ENCODE measurements at regions of chr20 and their contacts with region 1.

Region 1: DNA sequence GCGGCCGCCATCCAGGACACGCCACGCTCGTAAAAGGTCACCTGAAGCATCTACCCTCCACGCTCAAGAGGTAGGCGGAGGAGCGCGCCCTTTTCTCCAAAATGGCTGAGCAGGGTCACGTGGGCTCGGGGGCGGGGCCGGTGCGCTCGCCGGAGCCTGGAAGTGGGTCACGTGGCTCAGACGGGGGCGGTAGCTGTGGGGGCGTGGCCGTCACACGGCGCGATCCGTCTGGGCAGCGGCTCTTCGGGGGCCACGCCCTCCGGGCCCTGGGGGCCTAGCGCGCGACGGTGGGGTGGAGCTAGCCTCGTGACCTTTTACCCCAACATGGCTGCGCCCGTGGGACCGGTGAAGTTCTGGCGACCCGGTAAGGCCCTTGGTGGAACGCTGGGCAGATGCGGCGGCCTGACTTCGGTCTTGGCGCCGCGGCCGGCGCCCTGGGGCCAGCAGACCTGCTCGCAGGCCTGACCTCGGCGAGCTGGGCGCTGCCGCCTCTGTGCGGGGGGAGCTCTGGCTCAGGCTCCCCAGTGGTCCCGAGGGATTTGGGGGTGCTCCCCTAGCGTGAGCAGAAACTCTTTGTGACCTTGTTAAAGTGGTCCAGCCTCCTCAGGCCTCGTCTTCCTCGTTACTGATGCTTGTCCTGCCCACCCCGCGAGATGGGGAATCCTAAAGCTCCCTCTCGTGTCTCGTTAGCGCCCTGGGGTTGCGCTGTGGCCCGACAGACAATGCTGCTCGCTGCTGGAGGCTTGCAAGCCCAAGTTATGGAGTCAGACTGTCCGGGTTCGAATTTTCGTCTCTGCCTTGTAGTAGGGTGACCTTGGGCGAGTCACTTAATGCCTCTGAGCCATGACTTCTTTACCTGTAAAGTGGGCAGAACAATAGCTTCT is at the start of gene DHX35:
- DNase-seq: peak; percentile 98 to 99
- ATAC-seq: peak; percentile 100
- H3K4me3 ChIP-seq: peak within 1 kb of the TSS; percentile 82 to 99 (median 96)
- H3K27ac ChIP-seq: peak within 1 kb of the TSS; percentile 89 to 96 (median 94)
- H3K4me1 ChIP-seq: peaks cover 0 to 22% (median 15%) of the 10 kb centered on the region in 9 donors
- H3K27me3 ChIP-seq: no peaks in the 10 kb centered on the region
- CTCF ChIP-seq: peak in 7 of 9 donors; percentile 31 to 65 (median 47)
- total RNA-seq, gene DHX35: 8.8 to 14.3 (median 10.6) TPM

Region 2: DNA sequence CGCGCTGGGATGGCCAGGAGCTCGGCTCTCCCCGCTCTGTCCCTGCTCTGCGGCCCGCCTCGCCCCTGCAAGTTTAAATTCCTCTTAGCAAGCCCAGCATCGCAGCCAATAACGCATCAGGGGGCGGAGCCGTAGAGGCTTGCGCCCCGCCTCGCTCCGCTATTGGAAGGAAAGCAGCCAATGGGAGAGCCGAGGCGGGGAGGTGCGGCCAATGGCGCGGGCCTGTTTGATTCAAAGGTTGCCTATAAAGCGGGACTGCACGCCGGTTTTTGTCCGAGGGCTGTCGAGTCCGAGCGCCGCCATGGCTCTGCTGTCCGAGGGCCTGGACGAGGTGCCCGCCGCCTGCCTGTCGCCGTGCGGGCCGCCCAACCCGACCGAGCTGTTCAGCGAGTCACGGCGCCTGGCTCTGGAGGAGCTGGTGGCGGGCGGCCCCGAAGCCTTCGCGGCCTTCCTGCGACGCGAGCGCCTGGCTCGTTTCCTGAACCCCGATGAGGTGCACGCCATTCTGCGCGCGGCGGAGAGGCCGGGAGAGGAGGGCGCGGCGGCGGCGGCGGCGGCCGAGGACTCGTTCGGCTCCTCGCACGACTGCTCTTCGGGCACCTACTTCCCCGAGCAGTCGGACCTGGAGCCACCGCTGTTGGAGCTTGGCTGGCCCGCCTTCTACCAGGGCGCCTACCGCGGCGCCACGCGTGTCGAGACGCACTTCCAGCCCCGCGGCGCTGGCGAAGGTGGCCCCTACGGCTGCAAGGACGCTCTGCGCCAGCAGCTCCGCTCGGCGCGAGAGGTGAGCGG is 35.9 kb before region 1 on chr20 and contains the start of gene FAM83D:
- intact Hi-C with region 1: loop called in 3 of 10 experiments (anchors 1 to 2 kb)
- DNase-seq: peak; percentile 92 to 94
- ATAC-seq: peak; percentile 96 to 99 (median 97)
- H3K4me3 ChIP-seq: peak within 1 kb of the TSS; percentile 33 to 74 (median 64)
- H3K27ac ChIP-seq: peak within 1 kb of the TSS in 2 of 10 donors; percentile 30 to 69
- H3K4me1 ChIP-seq: peaks cover 0 to 30% (median 17%) of the 10 kb centered on the region in 9 donors
- H3K27me3 ChIP-seq: peaks cover 0 to 6% (median 0%) of the 10 kb centered on the region in 7 donors
- CTCF ChIP-seq: peak in 4 of 9 donors; percentile 1 to 96 (median 40)
- total RNA-seq, gene FAM83D: 0.12 to 2.8 (median 0.46) TPM

Measured in heart right ventricle (tissue), 16 donors.